AG04449 (cell line): ENCODE measurements at regions of chr5 and their contacts with region 1.

Region 1: GRCh38 chr5:172770675-172771438 is at the start of gene DUSP1:
- DNase-seq: peak; percentile 79
- H3K4me3 ChIP-seq: peak within 1 kb of the TSS; percentile 82
- CTCF ChIP-seq: peak; percentile 69

Region 2: GRCh38 chr5:172733131-172733973 is 37.5 kb before region 1 on chr5:
- CTCF ChIA-PET with region 1: interaction called, 6 read pairs
- POLR2A ChIA-PET with region 1: interaction called, 58 read pairs
- DNase-seq: peak; percentile 98
- H3K4me3 ChIP-seq: peak overlapping the region; percentile 36
- CTCF ChIP-seq: no peak

Region 3: DNA sequence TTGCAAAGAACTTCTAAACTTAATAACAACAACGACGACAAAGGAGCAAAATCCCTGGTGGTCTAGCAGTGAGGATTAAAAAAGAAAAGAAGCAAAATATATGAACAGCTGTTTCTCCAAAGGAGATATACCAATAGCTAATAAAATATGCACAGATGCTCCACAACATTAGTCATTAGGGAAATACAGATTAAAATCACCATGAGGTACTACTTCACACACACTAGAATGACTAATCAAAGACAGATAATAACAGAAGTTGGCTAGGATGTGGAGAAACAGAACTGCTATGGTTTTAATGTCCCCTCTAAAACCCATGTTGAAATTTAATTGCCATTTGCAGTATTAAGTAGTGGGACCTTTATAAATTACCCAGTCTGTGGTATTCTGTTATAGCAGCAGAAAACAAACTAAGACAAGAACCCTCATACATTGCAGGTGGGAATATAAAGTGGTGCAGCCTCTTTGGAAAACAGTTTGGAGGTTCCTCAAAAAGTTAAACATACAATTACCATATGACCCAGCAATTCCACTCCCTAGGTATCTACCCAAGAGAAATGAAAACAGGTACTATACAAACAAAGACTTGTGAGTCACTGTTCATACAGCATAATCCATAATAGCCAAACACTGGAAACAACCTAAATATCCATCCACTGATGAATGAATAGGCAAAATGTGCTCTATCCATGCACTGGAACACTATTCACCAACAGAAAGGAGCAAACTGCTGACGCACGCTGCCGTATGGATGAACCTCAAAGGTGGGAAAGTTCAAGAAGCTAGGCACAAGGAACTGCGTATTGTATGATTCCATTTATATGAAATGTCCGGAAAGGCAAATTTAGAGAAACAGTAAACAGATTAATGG is 11.5 kb after region 1 on chr5:
- CTCF ChIA-PET with region 1: interaction called, 11 read pairs
- POLR2A ChIA-PET with region 1: interaction called, 7 read pairs
- DNase-seq: no peak
- H3K4me3 ChIP-seq: no peak overlapping the region
- CTCF ChIP-seq: no peak

Region 4: DNA sequence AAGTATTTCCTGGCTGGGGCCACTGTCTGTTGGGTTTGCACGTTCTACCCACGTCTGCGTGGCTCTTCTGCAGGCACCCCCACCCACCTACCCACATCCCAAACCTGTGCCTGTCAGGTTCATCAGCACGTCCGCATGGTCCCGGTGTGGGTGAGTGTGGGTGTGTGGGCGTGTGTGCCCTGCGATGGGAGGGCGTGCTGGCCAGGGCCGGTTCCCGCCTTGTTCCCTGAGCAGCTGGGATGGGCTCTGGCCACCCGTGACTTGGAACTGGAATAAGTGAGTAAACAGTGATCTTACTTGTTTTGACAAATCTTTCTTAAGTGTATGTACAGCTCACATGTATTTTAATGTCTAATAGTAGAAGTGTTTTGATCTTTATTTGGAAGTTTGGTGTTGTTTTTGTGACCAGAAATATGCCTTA is 83.6 kb after region 1 on chr5:
- CTCF ChIA-PET with region 1: interaction called, 6 read pairs
- POLR2A ChIA-PET with region 1: interaction called, 12 read pairs
- DNase-seq: no peak
- H3K4me3 ChIP-seq: no peak overlapping the region
- CTCF ChIP-seq: no peak

Region 5: DNA sequence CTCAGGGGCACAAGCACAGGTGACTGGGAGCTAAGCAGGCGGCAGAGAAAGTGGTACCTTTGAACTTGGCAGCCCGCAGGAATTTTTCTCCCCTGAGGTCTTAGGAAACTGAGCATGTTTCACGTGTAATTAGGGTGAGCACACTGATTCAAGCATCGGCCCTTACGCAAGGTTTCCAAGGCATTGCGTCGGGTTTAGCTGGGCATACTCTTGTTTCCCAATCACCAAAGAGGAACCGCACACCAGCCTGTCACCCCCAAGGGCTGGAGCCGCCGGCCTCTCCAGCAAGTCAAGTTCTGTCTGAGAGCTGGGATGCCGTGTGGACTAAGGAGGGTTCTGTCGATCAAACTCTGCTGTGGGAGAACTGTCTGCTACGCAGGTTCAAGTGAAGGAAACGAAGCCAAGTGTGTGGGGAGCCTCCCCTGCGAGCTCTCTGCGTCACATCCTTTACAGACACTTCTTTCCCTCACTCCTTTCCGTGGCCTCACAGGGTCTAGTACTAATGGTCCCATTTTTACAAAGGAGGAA is 116.2 kb after region 1 on chr5:
- CTCF ChIA-PET with region 1: no interaction called
- POLR2A ChIA-PET with region 1: interaction called, 15 read pairs
- DNase-seq: peak; percentile 93
- H3K4me3 ChIP-seq: peak overlapping the region; percentile 3
- CTCF ChIP-seq: no peak

Region 6: GRCh38 chr5:172932313-172933017 is 161.6 kb after region 1 on chr5:
- CTCF ChIA-PET with region 1: interaction called, 66 read pairs
- POLR2A ChIA-PET with region 1: interaction called, 149 read pairs
- DNase-seq: no peak
- H3K4me3 ChIP-seq: no peak overlapping the region
- CTCF ChIP-seq: peak; percentile 95